HepG2 (cell line): ENCODE measurements at regions of chr6 and their contacts with region 1.

Region 1: DNA sequence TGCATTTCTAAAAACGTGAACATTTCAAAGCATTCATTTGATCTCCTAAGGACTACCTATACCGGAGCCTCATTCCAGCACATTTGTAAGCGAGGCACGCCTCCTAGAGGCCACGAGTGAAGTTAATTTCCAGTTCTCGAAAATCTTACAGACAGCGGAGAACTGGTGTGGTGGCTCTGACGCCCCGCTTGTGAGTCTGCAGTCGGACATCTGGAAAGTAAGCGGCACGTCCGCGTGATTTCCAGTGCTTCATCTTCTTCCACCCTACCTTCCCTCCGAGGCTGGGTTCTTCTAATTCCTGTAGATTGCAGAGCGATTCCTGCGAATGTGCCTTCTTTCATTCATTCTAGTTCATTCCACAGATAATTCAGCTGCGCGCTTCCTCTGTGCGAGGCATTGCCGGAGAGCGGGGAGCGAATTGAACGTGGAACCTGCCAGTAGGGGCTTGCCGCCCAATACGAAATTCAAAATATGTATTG is 810 bp upstream of the PRIM2 start:
- DNase-seq: peak; percentile 90
- ATAC-seq: peak; percentile 87
- H3K4me3 ChIP-seq: peak overlapping the region; percentile 64 to 76 (median 76)
- H3K27ac ChIP-seq: peak overlapping the region; percentile 42
- H3K4me1 ChIP-seq: peaks cover 46% of the 10 kb centered on the region
- H3K27me3 ChIP-seq: no peaks in the 10 kb centered on the region; a peak in 1 of 5 replicates
- CTCF ChIP-seq: peak; percentile 95
- EP300 ChIP-seq: no peak
- POLR2A ChIP-seq: peak in 1 of 2 experiments; percentile 40; a peak in 1 of 4 replicates
- RAD21 ChIP-seq: peak; percentile 81

Region 2: DNA sequence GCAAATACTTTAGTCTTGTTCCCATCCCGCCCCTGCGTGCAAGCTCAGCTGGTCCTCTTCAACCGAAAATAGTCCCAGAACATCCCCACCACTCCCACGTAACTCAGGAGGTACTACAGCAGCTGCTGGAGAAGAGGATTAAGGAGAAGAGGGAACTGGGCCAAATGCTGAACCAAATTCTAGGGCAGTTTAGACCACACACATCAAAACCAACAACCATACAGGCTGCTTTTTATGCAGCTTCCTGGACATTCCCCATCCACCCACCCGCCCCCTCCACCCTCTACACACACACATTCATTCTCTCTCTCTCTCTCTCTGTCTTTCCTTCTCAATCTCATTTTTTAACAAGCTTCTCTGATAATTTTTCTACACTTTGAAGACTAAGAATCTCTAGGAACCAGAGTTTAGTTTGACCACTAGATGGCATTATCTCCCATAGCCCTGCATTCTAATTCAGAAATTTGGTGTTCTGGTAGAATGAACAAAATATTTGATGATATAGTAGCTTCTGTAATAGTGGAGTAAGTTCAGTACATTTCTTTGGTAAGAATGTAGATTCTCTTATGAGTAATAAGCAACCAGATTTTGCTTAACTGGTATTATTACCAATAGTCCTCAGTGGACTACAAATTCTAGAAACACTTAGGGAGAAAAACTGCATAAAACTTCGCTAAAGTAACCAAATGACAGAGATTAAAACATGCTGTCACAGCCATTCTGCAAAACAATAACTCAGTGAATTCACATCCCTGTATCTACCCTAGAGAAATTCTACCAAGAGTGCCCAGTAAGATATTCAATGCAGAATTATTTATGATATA is 413.8 kb before region 1 on chr6:
- CTCF ChIA-PET with region 1: interaction called, 39 read pairs
- POLR2A ChIA-PET with region 1: no interaction called
- in situ Hi-C with region 1: loop called (anchors 5 kb)
- intact Hi-C with region 1: loop called (anchors 1 kb)
- DNase-seq: peak; percentile 25
- ATAC-seq: peak; percentile 54
- H3K4me3 ChIP-seq: no peak overlapping the region
- H3K27ac ChIP-seq: no peak overlapping the region
- H3K4me1 ChIP-seq: peaks cover 11% of the 10 kb centered on the region; the same call in 1 of the 2 replicates
- H3K27me3 ChIP-seq: peaks cover 0 to 1% of the 10 kb centered on the region in 2 experiments; a peak in 1 of 5 replicates
- CTCF ChIP-seq: peak; percentile 67
- EP300 ChIP-seq: no peak
- POLR2A ChIP-seq: no peak
- RAD21 ChIP-seq: peak; percentile 28; the same call in 1 of the 2 replicates

Region 3: GRCh38 chr6:57021086-57021720 is 295.4 kb before region 1 on chr6:
- CTCF ChIA-PET with region 1: no interaction called
- POLR2A ChIA-PET with region 1: no interaction called
- in situ Hi-C with region 1: loop called (anchors 25 kb)
- intact Hi-C with region 1: loop called (anchors 10 kb)
- DNase-seq: peak; percentile 46
- ATAC-seq: peak; percentile 91
- H3K4me3 ChIP-seq: no peak overlapping the region
- H3K27ac ChIP-seq: no peak overlapping the region
- H3K4me1 ChIP-seq: no peaks in the 10 kb centered on the region
- H3K27me3 ChIP-seq: peaks cover 0 to 4% of the 10 kb centered on the region in 2 experiments; a peak in 1 of 5 replicates
- CTCF ChIP-seq: peak; percentile 65
- EP300 ChIP-seq: no peak
- POLR2A ChIP-seq: no peak
- RAD21 ChIP-seq: no peak

Region 4: DNA sequence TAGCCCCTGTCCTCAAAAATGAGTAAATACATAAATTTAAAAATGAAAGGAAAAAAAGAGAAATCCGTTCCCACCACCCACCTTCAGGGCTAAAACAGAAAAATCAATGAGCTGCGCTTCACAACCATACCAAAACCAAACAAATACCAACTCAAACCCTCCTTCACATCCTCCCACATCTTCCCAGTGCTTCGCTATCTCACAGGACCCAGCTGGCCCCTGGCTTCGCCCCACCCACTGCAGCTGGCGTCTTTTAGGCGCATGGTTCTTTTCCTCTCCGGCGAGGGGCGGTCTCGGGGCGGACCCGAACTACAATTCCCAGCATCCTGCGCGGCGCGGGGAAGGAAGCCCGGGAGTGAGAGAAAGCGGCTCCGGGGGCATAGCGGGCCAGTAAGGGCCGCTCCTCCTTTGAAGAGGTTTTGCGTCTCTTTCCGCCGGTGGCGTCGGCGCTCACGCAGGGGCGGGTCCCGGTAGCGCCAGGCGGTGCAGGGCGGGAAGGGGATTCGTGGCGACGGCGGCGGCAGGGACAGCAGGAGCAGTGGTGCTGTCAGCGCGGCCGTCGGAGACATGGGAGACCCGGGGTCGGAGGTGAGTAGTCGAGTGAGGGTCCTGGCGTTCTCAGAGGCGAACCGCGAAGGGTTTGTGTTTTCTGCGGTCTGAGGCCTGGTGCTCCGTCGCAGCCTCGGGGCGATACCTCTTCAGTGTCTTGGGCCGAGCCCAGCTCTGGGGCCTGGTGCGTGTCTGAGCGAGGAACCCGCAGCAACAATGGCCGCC is 226.7 kb before region 1 on chr6 and contains the start of gene ZNF451:
- CTCF ChIA-PET with region 1: no interaction called
- POLR2A ChIA-PET with region 1: no interaction called
- in situ Hi-C with region 1: no loop called
- intact Hi-C with region 1: loop called (anchors 10 kb)
- DNase-seq: peak; percentile 97
- ATAC-seq: peak; percentile 98
- H3K4me3 ChIP-seq: peak within 1 kb of the TSS; percentile 45 to 66 (median 62)
- H3K27ac ChIP-seq: peak within 1 kb of the TSS; percentile 65
- H3K4me1 ChIP-seq: peaks cover 67% of the 10 kb centered on the region
- H3K27me3 ChIP-seq: no peaks in the 10 kb centered on the region
- CTCF ChIP-seq: peak; percentile 41; the same call in 1 of the 2 replicates
- EP300 ChIP-seq: peak in 1 of 2 experiments; percentile 60; a peak in 2 of 4 replicates
- POLR2A ChIP-seq: peak; percentile 83 to 85
- RAD21 ChIP-seq: peak; percentile 62
- total RNA-seq, gene ZNF451: 65.7 and 104 TPM in 2 replicates

Region 5: GRCh38 chr6:57190140-57190539 is 126.5 kb before region 1 on chr6:
- CTCF ChIA-PET with region 1: interaction called, 6 read pairs
- POLR2A ChIA-PET with region 1: no interaction called
- in situ Hi-C with region 1: loop called (anchors 5 kb)
- intact Hi-C with region 1: loop called (anchors 1 kb)
- DNase-seq: peak; percentile 55
- ATAC-seq: peak; percentile 86
- H3K4me3 ChIP-seq: no peak overlapping the region
- H3K27ac ChIP-seq: no peak overlapping the region
- H3K4me1 ChIP-seq: no peaks in the 10 kb centered on the region
- H3K27me3 ChIP-seq: no peaks in the 10 kb centered on the region
- CTCF ChIP-seq: peak; percentile 45
- EP300 ChIP-seq: no peak
- POLR2A ChIP-seq: no peak
- RAD21 ChIP-seq: peak; percentile 47; the same call in 1 of the 2 replicates

Region 6: DNA sequence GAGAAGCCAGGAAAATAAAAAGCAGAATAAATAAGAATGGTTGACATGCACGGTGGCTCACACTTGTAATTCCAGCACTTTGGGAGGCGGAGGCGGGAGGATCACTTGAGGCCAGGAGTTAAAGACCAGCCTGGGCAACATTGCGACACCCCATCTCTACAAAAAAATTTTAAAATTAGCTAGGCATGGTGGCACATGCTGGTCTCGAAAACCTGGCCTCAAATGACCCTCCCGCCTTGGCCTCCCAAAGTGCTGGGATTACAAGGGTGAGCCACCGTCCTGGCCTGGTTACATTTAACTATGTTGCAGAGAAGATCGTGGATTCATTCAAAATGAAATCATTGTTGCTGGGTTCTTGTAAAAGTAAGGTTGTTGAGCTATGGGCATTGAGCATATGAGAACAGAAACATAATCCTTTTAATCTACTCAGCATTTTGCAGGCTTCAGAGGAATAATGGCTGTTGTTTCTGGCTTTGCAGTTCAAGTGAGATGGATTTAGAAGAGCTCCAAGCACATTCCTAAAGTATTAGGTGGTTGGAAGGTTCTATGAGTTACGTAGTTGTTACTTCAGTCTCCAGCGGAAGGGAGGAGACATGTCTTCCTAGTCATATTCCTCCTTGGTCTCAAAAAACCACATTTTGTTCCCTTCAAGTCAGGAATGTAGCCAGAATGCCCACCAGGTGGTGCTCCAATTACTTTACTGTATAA is 48.9 kb before region 1 on chr6:
- CTCF ChIA-PET with region 1: interaction called, 39 read pairs
- POLR2A ChIA-PET with region 1: no interaction called
- in situ Hi-C with region 1: loop called (anchors 10 kb)
- intact Hi-C with region 1: loop called (anchors 1 kb)
- DNase-seq: peak; percentile 65
- ATAC-seq: peak; percentile 91
- H3K4me3 ChIP-seq: no peak overlapping the region
- H3K27ac ChIP-seq: no peak overlapping the region
- H3K4me1 ChIP-seq: no peaks in the 10 kb centered on the region
- H3K27me3 ChIP-seq: no peaks in the 10 kb centered on the region; a peak in 1 of 5 replicates
- CTCF ChIP-seq: peak; percentile 77
- EP300 ChIP-seq: no peak
- POLR2A ChIP-seq: no peak
- RAD21 ChIP-seq: peak; percentile 62; the same call in 1 of the 2 replicates